ENCODE measurements at regions of chr11 and their contacts with region 1.

Region 1: DNA sequence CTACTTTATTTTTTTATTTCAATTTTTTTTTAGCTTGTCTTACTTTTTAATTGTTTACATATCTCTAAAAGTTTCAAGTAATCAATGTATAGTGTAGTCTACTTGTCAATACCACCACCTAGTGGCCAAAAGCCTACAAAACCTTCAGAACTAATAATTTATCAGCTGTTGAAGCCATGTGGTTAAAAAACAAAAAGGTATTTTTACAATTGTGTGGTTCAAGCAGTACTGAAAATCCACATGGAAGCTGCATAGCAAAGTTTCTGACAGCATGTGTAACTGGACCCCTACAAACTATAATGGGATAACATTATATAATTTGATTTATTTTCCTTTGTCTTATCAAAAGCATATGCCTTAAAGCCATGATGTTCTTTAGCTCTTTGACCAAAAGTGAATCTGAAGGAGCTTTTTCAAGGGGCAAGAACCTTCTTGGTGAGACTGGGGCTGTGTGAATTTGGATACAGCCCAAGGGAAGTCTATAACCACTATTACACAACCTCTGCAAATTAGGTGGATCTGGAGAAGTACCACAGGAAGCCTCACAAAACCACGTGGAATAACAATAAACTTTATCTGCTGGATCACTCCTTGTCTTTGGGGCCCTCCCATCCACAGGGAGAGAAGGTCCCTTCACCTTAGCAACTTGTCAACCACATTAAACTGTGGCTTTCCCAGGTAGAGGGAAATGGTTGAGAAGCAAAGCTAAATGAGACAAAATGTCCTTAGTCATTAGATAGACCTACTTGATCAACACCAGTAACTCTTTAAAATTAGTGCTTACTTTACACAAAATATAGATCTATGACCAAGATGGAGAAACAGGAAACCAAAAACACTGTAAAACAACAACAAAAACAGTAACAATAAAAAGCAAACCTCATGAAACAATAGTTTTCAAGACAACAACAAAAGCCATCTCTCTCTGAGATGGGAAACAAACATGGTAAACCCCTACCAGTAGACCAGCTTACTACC is 9.9 kb downstream of the NARS2 start:
- DNase-seq: peak in 1 of 5 donors; percentile 35
- ATAC-seq: peak in 3 of 4 donors; percentile 48 to 53 (median 50)
- H3K4me3 ChIP-seq: no peak overlapping the region
- H3K27ac ChIP-seq: no peak overlapping the region
- H3K4me1 ChIP-seq: peaks cover 0 to 41% (median 24%) of the 10 kb centered on the region in 12 donors
- H3K27me3 ChIP-seq: no peaks in the 10 kb centered on the region
- CTCF ChIP-seq: peak; percentile 70 to 86 (median 78)
- POLR2A ChIP-seq: no peak

Region 2: GRCh38 chr11:77994412-77995362 is 570.1 kb before region 1 on chr11 and contains the start of gene INTS4:
- intact Hi-C with region 1: loop called in 1 of 10 experiments (anchors 10 kb)
- DNase-seq: peak; percentile 99 to 100 (median 99)
- ATAC-seq: peak; percentile 99
- H3K4me3 ChIP-seq: peak within 1 kb of the TSS; percentile 35 to 91 (median 72)
- H3K27ac ChIP-seq: peak within 1 kb of the TSS in 11 of 12 donors; percentile 73 to 92 (median 84)
- H3K4me1 ChIP-seq: peaks cover 0 to 27% (median 17%) of the 10 kb centered on the region in 12 donors
- H3K27me3 ChIP-seq: no peaks in the 10 kb centered on the region
- CTCF ChIP-seq: no peak
- POLR2A ChIP-seq: peak; percentile 11 to 59
- total RNA-seq, gene INTS4: 11.6 to 23.9 (median 15.6) TPM

Region 3: DNA sequence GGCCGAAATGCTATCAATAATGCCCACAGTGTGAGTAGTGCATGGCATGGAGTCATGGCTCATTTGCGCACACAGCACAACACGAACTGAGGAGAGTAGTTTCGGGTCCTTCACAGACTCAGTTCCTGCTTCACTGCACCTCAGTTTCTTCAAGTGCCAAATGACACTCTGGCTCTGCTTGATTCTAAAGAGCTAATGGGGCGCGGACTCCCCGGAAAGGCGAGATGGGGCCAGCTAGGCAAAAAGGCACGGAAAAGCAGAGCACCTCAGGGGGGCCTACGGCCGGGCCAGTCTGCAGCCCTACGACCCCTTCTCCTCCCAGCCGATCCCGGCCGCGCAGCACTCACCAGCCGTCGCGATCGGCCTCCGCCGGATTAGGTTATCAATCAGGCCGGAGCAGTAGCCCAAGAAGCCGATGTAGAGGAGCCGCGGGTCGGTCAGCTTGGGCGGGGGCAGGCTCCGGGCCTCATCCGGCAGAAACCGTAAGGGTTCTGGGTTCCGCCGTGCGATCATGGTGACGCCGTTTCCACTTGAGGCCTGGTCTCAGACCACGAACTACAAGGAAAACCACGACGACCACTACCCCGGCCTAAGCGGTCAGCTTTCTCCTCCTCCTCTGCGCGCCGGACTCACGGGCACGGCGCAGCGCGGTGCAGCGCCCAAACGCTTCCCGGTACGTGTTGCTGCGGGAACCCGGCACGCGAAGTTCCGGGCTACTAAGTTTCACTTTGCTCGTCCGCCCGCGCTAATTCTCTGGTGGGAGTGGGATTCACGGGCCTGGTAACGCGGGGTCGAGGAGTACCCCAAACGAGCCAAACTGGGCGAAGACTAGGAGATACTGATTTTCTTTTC is 485.3 kb before region 1 on chr11 and contains the start of gene NDUFC2:
- intact Hi-C with region 1: loop called in 1 of 10 experiments (anchors 10 kb)
- DNase-seq: peak; percentile 78 to 90 (median 84)
- ATAC-seq: peak; percentile 94 to 96 (median 94)
- H3K4me3 ChIP-seq: peak within 1 kb of the TSS; percentile 74 to 100 (median 90)
- H3K27ac ChIP-seq: peak within 1 kb of the TSS; percentile 65 to 93 (median 86)
- H3K4me1 ChIP-seq: peaks cover 0 to 51% (median 34%) of the 10 kb centered on the region in 12 donors
- H3K27me3 ChIP-seq: no peaks in the 10 kb centered on the region
- CTCF ChIP-seq: no peak
- POLR2A ChIP-seq: peak in 1 of 2 donors; percentile 64
- total RNA-seq, gene NDUFC2: 164 to 330 (median 258) TPM

Region 4: DNA sequence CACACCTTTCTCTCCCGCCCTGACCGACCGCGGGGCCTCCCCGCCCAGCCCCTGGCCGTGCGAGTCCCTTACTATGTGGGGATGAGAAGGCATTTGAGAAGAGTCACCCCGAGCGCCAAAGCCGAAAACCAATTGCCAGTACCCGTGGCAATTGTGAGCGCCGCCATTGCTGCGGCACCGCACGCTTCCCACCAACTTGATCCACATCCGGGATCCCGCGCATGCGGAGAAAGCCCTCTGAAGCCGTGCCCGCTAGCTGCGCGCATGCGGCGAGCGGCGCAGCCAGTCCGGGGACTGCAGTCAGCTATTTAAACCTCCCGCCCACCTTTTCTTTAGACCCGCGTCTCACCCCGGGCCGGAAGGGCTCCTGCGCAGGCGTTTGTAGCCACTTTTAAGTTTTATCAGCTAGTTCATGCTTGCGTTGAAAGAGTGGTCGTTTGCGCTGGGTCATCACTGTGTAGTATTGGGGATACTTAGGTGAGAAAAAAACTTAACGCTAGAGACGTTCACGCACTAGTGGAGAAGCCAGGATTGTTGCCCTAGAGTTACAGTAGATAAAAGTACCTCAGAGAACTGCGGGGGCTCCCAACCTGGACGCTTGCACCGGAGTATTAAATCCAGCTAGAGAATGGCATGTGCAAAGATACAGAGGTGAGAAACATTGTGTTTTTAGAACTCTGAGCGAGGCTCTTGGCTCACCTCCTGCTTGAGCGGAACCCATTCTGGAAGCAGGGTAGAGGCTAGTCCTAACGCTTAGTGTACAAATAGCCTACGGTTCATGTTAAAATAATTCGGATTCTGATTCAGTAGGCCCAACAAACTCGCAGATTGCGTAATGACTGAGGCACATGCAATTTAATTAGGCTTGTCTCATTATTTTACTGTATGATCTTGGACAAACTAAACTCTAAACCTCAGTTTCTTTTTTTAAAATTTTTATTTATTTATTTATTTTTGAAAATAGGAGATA is 425.1 kb before region 1 on chr11 and contains the start of gene ALG8:
- intact Hi-C with region 1: loop called in 7 of 10 experiments (anchors 5 to 10 kb)
- DNase-seq: peak; percentile 95 to 98 (median 96)
- ATAC-seq: peak; percentile 97 to 99 (median 99)
- H3K4me3 ChIP-seq: peak within 1 kb of the TSS; percentile 47 to 88 (median 73)
- H3K27ac ChIP-seq: peak within 1 kb of the TSS; percentile 20 to 79 (median 74)
- H3K4me1 ChIP-seq: peaks cover 0 to 28% (median 14%) of the 10 kb centered on the region in 12 donors
- H3K27me3 ChIP-seq: no peaks in the 10 kb centered on the region
- CTCF ChIP-seq: no peak
- POLR2A ChIP-seq: peak in 1 of 2 donors; percentile 59
- total RNA-seq, gene ALG8: 14.1 to 24.6 (median 17.7) TPM

Region 5: DNA sequence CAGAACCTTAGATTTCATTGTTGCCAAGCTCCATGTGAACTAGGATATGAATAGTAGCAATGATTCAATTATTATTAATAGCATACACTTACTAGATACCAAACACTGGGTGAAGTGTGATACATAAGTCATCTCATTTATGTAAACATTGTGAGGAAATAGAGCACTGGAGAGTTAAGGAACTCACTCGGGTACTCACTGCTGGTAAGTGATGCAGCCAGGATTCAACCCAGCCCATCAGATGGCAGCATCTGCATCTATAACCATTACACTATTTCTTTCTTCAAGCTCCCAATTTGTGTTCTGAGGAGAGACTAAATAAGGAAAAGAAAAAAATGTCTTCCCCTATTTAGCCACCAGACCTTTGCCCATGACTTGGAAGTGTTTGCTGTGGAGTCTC is 415.1 kb before region 1 on chr11:
- intact Hi-C with region 1: loop called (anchors 5 to 10 kb)
- DNase-seq: no peak
- ATAC-seq: peak; percentile 56 to 84 (median 78)
- H3K4me3 ChIP-seq: no peak overlapping the region
- H3K27ac ChIP-seq: no peak overlapping the region
- H3K4me1 ChIP-seq: peaks cover 0 to 11% (median 0%) of the 10 kb centered on the region in 12 donors
- H3K27me3 ChIP-seq: no peaks in the 10 kb centered on the region
- CTCF ChIP-seq: peak in 11 of 12 donors; percentile 11 to 66 (median 36)
- POLR2A ChIP-seq: no peak

Region 6: GRCh38 chr11:78223320-78223954 is 341.3 kb before region 1 on chr11:
- intact Hi-C with region 1: loop called (anchors 2 to 5 kb)
- DNase-seq: no peak
- ATAC-seq: no peak
- H3K4me3 ChIP-seq: no peak overlapping the region
- H3K27ac ChIP-seq: no peak overlapping the region
- H3K4me1 ChIP-seq: peaks cover 0 to 3% (median 0%) of the 10 kb centered on the region in 12 donors
- H3K27me3 ChIP-seq: no peaks in the 10 kb centered on the region
- CTCF ChIP-seq: no peak
- POLR2A ChIP-seq: no peak

Region 7: GRCh38 chr11:78228467-78228866 is 336.3 kb before region 1 on chr11:
- intact Hi-C with region 1: loop called (anchors 2 to 5 kb)
- DNase-seq: peak in 1 of 5 donors; percentile 32
- ATAC-seq: peak in 3 of 4 donors; percentile 53 to 70 (median 55)
- H3K4me3 ChIP-seq: no peak overlapping the region
- H3K27ac ChIP-seq: no peak overlapping the region
- H3K4me1 ChIP-seq: peaks cover 0 to 41% (median 24%) of the 10 kb centered on the region in 12 donors
- H3K27me3 ChIP-seq: no peaks in the 10 kb centered on the region
- CTCF ChIP-seq: peak in 11 of 12 donors; percentile 33 to 73 (median 65)
- POLR2A ChIP-seq: no peak

Region 8: DNA sequence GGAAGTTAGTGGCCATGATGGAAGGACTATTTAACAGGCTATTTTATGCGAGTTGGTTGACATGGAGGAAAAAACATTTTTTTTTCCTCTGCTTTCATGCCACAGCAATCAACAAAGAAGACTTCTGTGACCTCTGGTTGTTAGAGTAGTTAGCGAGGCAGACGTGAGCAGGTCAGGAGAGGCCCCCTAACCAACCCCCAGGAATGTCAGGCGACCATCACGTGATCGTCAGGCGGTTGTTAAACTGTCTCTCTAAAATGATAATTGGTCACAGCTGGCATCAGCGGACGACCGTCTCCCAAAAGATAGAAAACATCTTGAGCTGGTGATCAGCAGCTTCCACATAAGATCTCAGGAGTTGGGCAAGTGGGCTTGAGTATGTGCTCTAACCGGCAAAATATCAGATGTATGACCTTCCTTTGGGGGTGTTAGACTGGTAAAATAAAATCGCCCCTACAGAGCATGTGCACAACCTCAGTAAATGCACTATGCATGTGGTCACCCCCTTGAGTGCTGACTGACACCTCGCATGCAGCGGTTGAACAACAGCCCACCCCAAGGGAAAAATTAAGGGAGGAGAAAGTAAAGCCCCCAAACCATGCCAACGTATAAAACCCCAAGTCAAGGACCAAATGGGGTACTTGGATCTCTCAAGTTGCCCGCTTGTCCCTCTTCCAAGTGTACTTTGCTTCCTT is 30.8 kb after region 1 on chr11:
- intact Hi-C with region 1: no loop called
- DNase-seq: no peak
- ATAC-seq: no peak
- H3K4me3 ChIP-seq: no peak overlapping the region
- H3K27ac ChIP-seq: no peak overlapping the region
- H3K4me1 ChIP-seq: no peaks in the 10 kb centered on the region
- H3K27me3 ChIP-seq: peaks cover 0 to 4% (median 0%) of the 10 kb centered on the region in 9 donors
- CTCF ChIP-seq: no peak
- POLR2A ChIP-seq: no peak